HEK293 (cell line): ENCODE measurements at regions of chr19 and their contacts with region 1.

Region 1: GRCh38 chr19:8580710-8581281 is 3.6 kb upstream of the MYO1F start:
- H3K4me3 ChIP-seq: no peak overlapping the region
- H3K27ac ChIP-seq: no peak overlapping the region
- H3K4me1 ChIP-seq: no peaks in the 10 kb centered on the region
- CTCF ChIP-seq: peak; percentile 96

Region 2: GRCh38 chr19:8389891-8390616 is 190.7 kb before region 1 on chr19 and contains the start of gene RAB11B:
- CTCF ChIA-PET with region 1: no interaction called
- POLR2A ChIA-PET with region 1: no interaction called
- H3K4me3 ChIP-seq: peak within 1 kb of the TSS; percentile 97
- H3K27ac ChIP-seq: peak within 1 kb of the TSS; percentile 98
- H3K4me1 ChIP-seq: peaks cover 3% of the 10 kb centered on the region; the same call in 1 of the 2 replicates
- CTCF ChIP-seq: no peak

Region 3: GRCh38 chr19:8526345-8527067 is 54.3 kb before region 1 on chr19:
- CTCF ChIA-PET with region 1: interaction called, 11 read pairs
- POLR2A ChIA-PET with region 1: no interaction called
- H3K4me3 ChIP-seq: peak overlapping the region; percentile 70
- H3K27ac ChIP-seq: peak overlapping the region; percentile 44; the same call in 1 of the 2 replicates
- H3K4me1 ChIP-seq: no peaks in the 10 kb centered on the region
- CTCF ChIP-seq: no peak

Region 4: DNA sequence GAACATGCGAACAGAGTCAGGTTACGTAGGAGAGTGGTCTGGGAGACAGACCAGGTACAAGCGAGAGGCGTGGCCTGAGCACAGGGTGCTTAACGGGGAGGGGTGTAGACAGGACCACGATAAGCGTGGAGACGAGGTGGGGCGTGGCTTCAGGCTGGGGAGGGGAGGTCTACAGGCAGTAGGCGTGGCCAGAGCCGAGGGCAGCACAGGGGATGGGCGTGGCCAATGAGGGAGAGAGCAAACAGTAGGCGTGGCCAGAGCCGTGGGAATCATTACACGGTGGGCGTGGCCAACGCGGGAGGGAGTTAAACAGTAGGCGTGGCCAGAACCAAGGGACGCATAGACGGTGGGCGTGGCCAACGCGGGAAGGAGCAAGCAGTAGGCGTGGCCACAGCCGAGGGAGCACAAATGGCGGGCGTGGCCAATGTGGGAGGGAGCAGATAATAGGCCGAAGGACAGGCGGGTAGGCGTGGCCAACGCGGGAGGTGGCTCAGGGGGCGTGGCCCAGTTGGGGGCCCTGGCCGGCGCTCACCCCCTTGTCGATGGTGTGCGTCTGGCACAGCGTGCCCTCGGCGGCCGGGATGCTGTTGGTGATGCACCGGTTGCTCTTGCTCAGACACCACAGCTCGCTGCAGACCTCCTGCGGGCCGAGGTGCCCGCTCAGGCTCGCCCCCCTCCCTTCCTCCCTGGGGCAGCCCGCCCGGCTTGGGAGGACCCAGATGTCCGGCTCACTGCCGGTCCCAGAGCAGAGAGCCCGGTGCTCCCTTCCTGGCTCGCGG is 11.6 kb after region 1 on chr19:
- CTCF ChIA-PET with region 1: interaction called, 60 read pairs
- POLR2A ChIA-PET with region 1: interaction called, 3 read pairs
- H3K4me3 ChIP-seq: peak overlapping the region; percentile 13; the same call in 1 of the 2 replicates
- H3K27ac ChIP-seq: no peak overlapping the region
- H3K4me1 ChIP-seq: no peaks in the 10 kb centered on the region
- CTCF ChIP-seq: no peak

Region 5: GRCh38 chr19:8615813-8616596 is 35.2 kb after region 1 on chr19:
- CTCF ChIA-PET with region 1: interaction called, 14 read pairs
- POLR2A ChIA-PET with region 1: no interaction called
- H3K4me3 ChIP-seq: no peak overlapping the region
- H3K27ac ChIP-seq: no peak overlapping the region
- H3K4me1 ChIP-seq: no peaks in the 10 kb centered on the region
- CTCF ChIP-seq: peak; percentile 71

Region 6: GRCh38 chr19:8695501-8695900 is 114.7 kb after region 1 on chr19:
- CTCF ChIA-PET with region 1: interaction called, 41 read pairs
- POLR2A ChIA-PET with region 1: no interaction called
- H3K4me3 ChIP-seq: no peak overlapping the region
- H3K27ac ChIP-seq: no peak overlapping the region
- H3K4me1 ChIP-seq: no peaks in the 10 kb centered on the region
- CTCF ChIP-seq: no peak